GM13976 (cell line): ENCODE measurements at regions of chr11 and their contacts with region 1.

Region 1: DNA sequence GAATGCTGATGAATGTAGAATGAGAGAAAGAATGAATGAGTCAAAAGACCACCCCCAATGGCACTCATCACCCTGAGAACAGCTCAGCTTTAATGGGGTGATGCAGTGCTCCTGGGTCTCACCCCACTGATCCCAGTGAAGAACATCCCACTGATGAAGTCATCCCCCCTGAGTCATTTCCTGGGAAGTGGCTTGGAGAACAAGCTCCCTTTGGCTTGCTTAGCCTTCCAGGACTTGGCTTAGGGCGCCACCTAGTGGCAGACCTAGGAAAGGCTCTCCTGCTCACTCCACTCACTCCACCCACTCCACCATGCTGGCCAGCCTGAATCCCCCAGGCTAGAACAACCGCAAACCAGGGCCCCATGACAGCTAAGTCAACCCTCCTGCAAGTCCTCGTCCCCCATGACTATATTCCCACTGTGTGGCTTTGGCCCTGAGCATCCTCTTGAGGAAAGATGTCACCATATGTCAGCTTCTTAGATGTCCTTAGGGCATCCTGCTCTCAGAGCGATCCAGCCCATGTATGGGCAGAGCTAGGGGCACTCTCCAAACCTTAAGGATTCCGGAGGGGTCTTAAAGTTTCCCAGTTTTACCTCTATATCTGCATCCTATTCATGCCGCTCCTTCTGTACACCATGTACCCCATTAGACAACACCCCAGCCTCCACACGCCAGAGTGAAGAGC is 17.8 kb upstream of the TMPRSS13 start:
- DNase-seq: peak; percentile 78
- CTCF ChIP-seq: peak; percentile 93

Region 2: GRCh38 chr11:117843666-117844484 is 103.1 kb before region 1 on chr11:
- in situ Hi-C with region 1: loop called (anchors 5 kb)
- DNase-seq: peak; percentile 73
- CTCF ChIP-seq: peak; percentile 92

Region 3: DNA sequence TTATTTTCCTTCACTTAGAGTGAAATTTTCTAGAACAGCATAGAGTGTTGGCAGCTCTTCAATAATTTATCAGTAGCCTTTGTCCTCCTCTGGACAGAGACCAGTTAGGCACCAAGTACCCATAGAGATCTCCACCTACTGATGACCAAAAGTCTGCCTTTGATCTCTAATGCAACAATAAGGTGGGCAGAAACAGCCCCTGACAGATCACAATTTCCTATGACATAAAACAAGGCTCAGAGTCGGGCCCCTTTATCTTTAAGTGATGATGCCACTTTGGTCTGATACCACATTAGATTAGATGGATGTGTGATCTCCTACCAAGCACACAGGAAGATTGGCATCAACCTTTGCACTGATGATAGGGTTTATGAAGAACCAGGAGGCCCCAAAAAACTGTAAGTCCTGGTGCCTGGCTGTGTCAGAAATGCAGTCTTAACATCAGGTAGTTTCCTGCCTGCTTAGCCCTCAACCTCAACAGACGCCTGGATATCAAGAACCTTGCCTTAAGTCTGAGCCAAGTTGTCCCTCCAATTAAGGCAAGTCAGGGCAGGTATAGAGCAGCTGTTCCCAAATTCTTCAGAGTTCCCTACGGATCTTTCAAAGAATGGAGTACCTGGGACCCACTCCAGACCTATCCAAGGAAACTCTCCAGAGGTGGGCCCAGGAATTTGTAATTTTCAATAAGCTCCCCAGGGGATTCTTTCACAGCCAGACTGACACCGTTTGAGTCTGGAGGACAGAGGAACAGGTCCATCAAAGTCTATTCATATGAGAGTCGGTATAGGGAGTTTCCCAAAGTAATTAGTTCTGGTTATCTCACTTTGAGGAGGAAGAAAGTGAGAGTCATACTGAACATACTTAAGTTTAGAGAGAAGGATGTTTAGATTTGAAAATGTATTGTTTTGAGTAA is 99.3 kb after region 1 on chr11:
- in situ Hi-C with region 1: loop called (anchors 5 kb)
- DNase-seq: no peak
- CTCF ChIP-seq: no peak

Region 4: GRCh38 chr11:118238929-118239328 is 291.9 kb after region 1 on chr11:
- in situ Hi-C with region 1: no loop called
- DNase-seq: no peak
- CTCF ChIP-seq: no peak